Activated CD4-positive, alpha-beta memory T cell treated with anti-CD3 and anti-CD28 coated beads for 36 hours (primary cell): ENCODE measurements at regions of chr3 and their contacts with region 1.

Region 1: DNA sequence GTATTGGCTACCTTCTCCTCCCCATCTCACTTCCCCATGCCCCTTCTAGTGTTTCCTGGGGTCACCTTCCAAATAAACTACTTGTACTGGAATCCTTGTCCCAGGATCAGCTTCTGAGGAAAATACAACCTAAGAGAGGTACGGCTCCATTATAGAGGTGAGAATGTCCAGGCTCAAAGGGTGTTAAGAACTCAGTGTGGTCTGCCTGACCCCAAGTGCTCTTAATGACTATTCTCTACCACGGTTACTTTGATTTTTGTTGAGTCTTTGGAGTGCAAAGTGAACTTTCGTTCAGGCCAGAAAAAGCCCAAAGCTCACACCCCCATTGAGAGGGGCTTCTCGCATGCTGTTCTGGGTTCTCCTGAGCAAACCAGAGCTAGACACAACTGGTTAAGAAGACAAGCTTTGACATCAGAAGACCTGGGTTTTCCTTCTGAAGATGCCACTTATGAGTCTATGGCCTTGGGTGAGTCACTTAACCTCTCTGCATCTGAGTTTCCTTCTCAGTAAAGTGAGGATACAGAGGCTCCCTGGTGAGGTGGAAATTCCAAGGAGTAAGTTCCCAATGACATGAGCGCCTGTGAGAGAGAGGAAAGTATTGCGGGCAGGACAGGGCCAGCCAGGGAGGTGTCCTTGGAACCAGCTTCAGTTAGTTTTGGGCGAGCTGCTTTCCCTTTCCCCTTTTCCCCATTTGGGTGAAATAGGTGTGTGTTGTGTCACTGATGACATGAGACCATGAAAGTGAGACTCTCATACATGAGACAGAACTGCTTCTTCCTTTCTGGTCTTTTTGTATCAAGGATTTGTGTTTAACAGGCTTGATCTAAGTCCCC is 475.0 kb upstream of the PROK2 start:
- DNase-seq: peak; percentile 53
- H3K4me3 Mint-ChIP-seq: no peak overlapping the region
- H3K27ac Mint-ChIP-seq: peak overlapping the region; percentile 61
- H3K4me1 Mint-ChIP-seq: peaks cover 38% of the 10 kb centered on the region
- H3K27me3 Mint-ChIP-seq: peaks cover 12% of the 10 kb centered on the region

Region 2: DNA sequence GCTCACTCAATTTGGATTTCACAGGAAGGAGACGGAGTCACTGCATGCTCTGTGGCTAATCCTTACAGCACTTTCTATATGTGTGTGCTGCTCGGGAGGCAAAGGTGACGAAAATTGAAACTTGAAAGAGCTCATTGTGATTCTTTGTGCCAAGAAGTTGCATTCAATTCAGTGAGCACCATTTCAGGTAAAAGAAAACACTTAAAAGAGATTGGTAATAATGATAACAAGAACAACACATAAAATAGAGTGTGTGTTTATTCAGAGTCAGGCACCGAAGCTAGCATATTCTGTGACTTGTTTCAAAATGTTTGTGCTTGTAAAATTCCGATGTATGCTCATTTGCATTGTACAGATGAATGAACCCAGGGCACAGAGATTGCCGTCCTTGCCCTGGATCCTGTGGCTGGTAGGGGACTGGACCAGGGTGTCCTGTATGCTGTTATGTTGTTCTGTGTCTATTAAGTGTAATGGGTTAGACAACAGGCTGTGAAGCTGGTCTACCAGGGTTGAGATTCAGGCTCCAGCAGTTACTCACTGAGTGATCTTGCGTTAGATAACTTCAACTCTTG is 281.7 kb before region 1 on chr3:
- CTCF ChIA-PET with region 1: no interaction called
- POLR2A ChIA-PET with region 1: no interaction called
- intact Hi-C with region 1: loop called (anchors 5 kb)
- DNase-seq: peak; percentile 67
- H3K4me3 Mint-ChIP-seq: peak overlapping the region; percentile 38
- H3K27ac Mint-ChIP-seq: peak overlapping the region; percentile 88
- H3K4me1 Mint-ChIP-seq: peaks cover 44% of the 10 kb centered on the region
- H3K27me3 Mint-ChIP-seq: peaks cover 19% of the 10 kb centered on the region

Region 3: GRCh38 chr3:72205297-72205826 is 54.6 kb before region 1 on chr3:
- CTCF ChIA-PET with region 1: no interaction called
- POLR2A ChIA-PET with region 1: no interaction called
- intact Hi-C with region 1: no loop called
- DNase-seq: no peak
- H3K4me3 Mint-ChIP-seq: no peak overlapping the region
- H3K27ac Mint-ChIP-seq: no peak overlapping the region
- H3K4me1 Mint-ChIP-seq: no peaks in the 10 kb centered on the region
- H3K27me3 Mint-ChIP-seq: peaks cover 5% of the 10 kb centered on the region

Region 4: DNA sequence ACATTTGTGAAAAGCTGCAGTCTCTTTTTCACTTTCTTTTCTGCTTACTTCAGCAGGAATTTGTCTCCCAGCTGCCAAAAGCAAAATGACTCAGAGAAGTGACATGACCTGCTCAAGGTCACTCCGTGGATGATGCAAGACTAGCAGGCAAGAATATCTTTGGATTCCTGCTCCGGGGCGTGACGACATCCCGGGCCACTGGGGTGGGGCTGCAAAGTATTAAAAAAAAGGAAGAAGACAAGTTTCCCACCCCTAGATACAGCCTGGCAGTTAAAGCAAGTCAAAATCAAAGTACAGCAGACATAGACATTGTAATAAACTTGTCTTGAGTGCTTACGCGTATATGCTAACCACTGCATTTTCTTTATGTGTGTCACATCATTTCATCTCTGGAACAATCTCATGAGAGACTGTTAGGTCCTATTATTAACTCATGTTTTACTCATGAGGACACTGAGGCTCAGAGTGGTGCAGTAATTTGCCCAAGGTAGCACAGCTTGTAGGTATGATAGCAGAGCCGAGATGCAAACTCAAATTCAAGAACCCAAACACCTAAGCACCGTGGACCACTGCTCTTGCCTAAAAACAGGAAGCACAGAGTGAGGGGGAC is 10.2 kb after region 1 on chr3:
- CTCF ChIA-PET with region 1: no interaction called
- POLR2A ChIA-PET with region 1: no interaction called
- intact Hi-C with region 1: loop called (anchors 1 kb)
- DNase-seq: peak; percentile 47
- H3K4me3 Mint-ChIP-seq: no peak overlapping the region
- H3K27ac Mint-ChIP-seq: peak overlapping the region; percentile 64
- H3K4me1 Mint-ChIP-seq: peaks cover 55% of the 10 kb centered on the region
- H3K27me3 Mint-ChIP-seq: peaks cover 1% of the 10 kb centered on the region

Region 5: DNA sequence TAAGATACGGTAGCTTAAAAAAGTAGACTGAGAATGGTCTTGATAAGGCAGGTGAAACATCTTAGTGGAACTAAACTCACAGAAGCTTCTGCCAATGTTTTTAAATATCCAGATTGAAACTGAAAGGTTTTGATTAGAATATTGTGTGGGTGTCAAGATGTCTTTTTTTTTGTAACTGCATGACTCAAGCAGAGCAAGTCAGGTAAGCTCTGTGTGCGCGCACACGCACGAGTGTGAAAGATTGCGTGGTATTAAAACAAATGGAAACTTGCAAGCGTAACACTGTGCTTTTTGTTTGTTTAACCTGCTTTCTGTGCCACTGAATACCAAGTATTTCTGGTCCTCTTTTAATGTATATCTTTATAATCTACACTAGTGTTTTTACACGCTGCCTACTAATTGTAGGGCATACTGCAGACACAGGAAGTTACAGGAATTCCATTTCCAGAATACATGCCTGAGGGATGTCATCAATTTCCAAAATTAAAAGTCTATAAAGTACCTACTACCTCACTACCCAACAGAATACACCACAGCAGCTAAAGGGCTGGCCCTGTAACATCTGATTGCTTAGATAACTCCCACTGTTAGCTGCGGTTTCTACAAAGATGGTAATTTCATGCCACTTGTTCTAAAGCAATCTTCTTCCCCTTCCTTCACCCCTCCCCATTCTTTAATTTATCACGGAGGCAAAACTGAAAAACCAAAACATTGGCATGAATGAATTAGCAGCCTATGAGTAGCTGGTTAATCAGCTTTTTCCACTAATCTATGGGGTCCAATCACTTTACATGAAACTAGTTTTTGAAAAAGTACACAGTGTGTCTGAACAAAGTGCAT is 115.5 kb after region 1 on chr3:
- CTCF ChIA-PET with region 1: no interaction called
- POLR2A ChIA-PET with region 1: interaction called, 3 read pairs
- intact Hi-C with region 1: loop called (anchors 5 kb)
- DNase-seq: peak; percentile 70
- H3K4me3 Mint-ChIP-seq: peak overlapping the region; percentile 6
- H3K27ac Mint-ChIP-seq: peak overlapping the region; percentile 86
- H3K4me1 Mint-ChIP-seq: peaks cover 65% of the 10 kb centered on the region
- H3K27me3 Mint-ChIP-seq: no peaks in the 10 kb centered on the region